ENCODE measurements at regions of chr10 and their contacts with region 1.

Region 1: GRCh38 chr10:110210674-110211464 is 3.5 kb downstream of the MXI1 start:
- DNase-seq: peak; percentile 90
- ATAC-seq: peak; percentile 65
- H3K4me3 Mint-ChIP-seq: peak overlapping the region; percentile 93
- H3K27ac Mint-ChIP-seq: peak overlapping the region; percentile 91
- H3K4me1 Mint-ChIP-seq: peaks cover 48% of the 10 kb centered on the region
- H3K27me3 Mint-ChIP-seq: peaks cover 10% of the 10 kb centered on the region

Region 2: GRCh38 chr10:110225756-110226542 is 15.1 kb after region 1 on chr10:
- POLR2A ChIA-PET with region 1: interaction called, 16 read pairs
- DNase-seq: peak; percentile 88
- ATAC-seq: peak; percentile 78
- H3K4me3 Mint-ChIP-seq: peak overlapping the region; percentile 94
- H3K27ac Mint-ChIP-seq: peak overlapping the region; percentile 93
- H3K4me1 Mint-ChIP-seq: peaks cover 28% of the 10 kb centered on the region
- H3K27me3 Mint-ChIP-seq: peaks cover 2% of the 10 kb centered on the region

Region 3: GRCh38 chr10:110304780-110305421 is 94.0 kb after region 1 on chr10 and contains the start of gene SMNDC1:
- POLR2A ChIA-PET with region 1: interaction called, 15 read pairs
- DNase-seq: peak; percentile 96
- ATAC-seq: peak; percentile 91
- H3K4me3 Mint-ChIP-seq: peak within 1 kb of the TSS; percentile 95
- H3K27ac Mint-ChIP-seq: peak within 1 kb of the TSS; percentile 97
- H3K4me1 Mint-ChIP-seq: peaks cover 44% of the 10 kb centered on the region
- H3K27me3 Mint-ChIP-seq: no peaks in the 10 kb centered on the region
- total RNA-seq, gene SMNDC1: 36.4 to 39.2 TPM

Measured in activated naive CD8-positive, alpha-beta T cell treated with anti-CD3 and anti-CD28 coated beads, Interleukin-2, amount 10 ng/mL, durations not matched to agents 7 days and 5 days (primary cell).